ENCODE measurements at regions of chr2 and their contacts with region 1.

Region 1: GRCh38 chr2:201451292-201452057 is at the starts of genes STRADB and TRAK2:
- DNase-seq: peak; percentile 98
- ATAC-seq: peak; percentile 92
- H3K4me3 ChIP-seq: peak within 1 kb of the TSS; percentile 61 to 94 (median 69)
- H3K4me3 Mint-ChIP-seq: peak within 1 kb of the TSS; percentile 97
- H3K27ac ChIP-seq: peak within 1 kb of the TSS; percentile 54 to 88
- H3K27ac Mint-ChIP-seq: peak within 1 kb of the TSS; percentile 96
- H3K4me1 ChIP-seq: peaks cover 39 to 43% of the 10 kb centered on the region in 2 donors
- H3K4me1 Mint-ChIP-seq: peaks cover 41% of the 10 kb centered on the region
- H3K27me3 ChIP-seq: no peaks in the 10 kb centered on the region
- H3K27me3 Mint-ChIP-seq: no peaks in the 10 kb centered on the region
- CTCF ChIP-seq: peak; percentile 48
- total RNA-seq, gene STRADB: 17.5 and 20.6 TPM in 2 replicates
- total RNA-seq, gene TRAK2: 21.6 and 24.5 TPM in 2 replicates

Region 2: GRCh38 chr2:200525882-200526651 is 925.4 kb before region 1 on chr2 and contains the start of gene SGO2:
- CTCF ChIA-PET with region 1: no interaction called
- POLR2A ChIA-PET with region 1: no interaction called
- intact Hi-C with region 1: loop called (anchors 2 kb)
- DNase-seq: peak; percentile 95
- ATAC-seq: peak; percentile 100
- H3K4me3 ChIP-seq: peak within 1 kb of the TSS; percentile 75 to 93 (median 87)
- H3K4me3 Mint-ChIP-seq: peak within 1 kb of the TSS; percentile 93
- H3K27ac ChIP-seq: peak within 1 kb of the TSS in 1 of 2 donors; percentile 57
- H3K27ac Mint-ChIP-seq: peak within 1 kb of the TSS; percentile 83
- H3K4me1 ChIP-seq: peaks cover 7 to 9% of the 10 kb centered on the region in 2 donors
- H3K4me1 Mint-ChIP-seq: peaks cover 12% of the 10 kb centered on the region
- H3K27me3 ChIP-seq: peaks cover 0 to 6% (median 0%) of the 10 kb centered on the region in 4 experiments
- H3K27me3 Mint-ChIP-seq: peaks cover 8% of the 10 kb centered on the region
- CTCF ChIP-seq: no peak
- total RNA-seq, gene SGO2: 4.0 and 5.3 TPM in 2 replicates

Region 3: DNA sequence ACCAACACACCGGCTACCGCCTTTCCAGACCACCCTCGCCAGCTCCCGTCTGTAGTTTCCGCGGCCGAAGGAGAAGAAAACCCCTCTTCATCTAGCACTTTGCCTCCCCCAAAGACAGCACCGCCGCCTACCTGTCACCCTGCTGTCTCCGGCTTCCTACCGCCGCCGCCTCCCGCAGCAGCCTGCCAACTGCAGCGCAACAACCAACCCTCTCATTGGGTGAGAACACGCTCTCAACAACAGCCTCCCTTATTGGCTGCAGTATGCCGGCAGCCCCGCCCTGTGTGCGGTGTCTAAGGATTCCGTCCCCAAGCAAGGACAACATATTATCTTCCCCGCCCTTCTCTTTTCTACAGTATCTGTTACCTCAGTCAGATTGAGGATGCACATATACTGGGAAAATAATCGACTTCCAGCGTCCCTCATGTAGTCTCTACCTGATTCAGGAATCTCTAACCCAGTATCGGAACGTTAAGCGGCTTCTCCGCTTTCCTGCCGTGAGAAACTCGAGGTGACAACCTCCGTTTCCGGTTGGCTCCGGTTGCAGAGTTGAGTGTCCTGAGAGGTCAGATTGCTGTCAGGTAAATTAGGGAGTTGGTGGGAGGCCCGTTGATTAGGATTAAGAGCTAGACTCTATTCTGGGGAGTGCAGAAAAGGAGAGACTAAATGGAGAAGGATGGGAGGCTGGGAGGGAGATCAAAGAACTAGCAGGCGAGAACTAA is 379.8 kb before region 1 on chr2 and contains the starts of genes HYCC2 and NDUFB3:
- CTCF ChIA-PET with region 1: no interaction called
- POLR2A ChIA-PET with region 1: no interaction called
- intact Hi-C with region 1: loop called (anchors 1 kb)
- DNase-seq: peak; percentile 98
- ATAC-seq: peak; percentile 97
- H3K4me3 ChIP-seq: peak within 1 kb of the TSS; percentile 61 to 92 (median 86)
- H3K4me3 Mint-ChIP-seq: peak within 1 kb of the TSS; percentile 91
- H3K27ac ChIP-seq: peak within 1 kb of the TSS; percentile 58 to 91
- H3K27ac Mint-ChIP-seq: peak within 1 kb of the TSS; percentile 98
- H3K4me1 ChIP-seq: peaks cover 18 to 27% of the 10 kb centered on the region in 2 donors
- H3K4me1 Mint-ChIP-seq: peaks cover 39% of the 10 kb centered on the region
- H3K27me3 ChIP-seq: no peaks in the 10 kb centered on the region
- H3K27me3 Mint-ChIP-seq: no peaks in the 10 kb centered on the region
- CTCF ChIP-seq: peak; percentile 40
- total RNA-seq, gene HYCC2: 30.1 and 32.4 TPM in 2 replicates
- total RNA-seq, gene NDUFB3: 35.1 and 44.7 TPM in 2 replicates

Region 4: GRCh38 chr2:201420442-201421113 is 30.9 kb before region 1 on chr2:
- CTCF ChIA-PET with region 1: no interaction called
- POLR2A ChIA-PET with region 1: no interaction called
- intact Hi-C with region 1: no loop called
- DNase-seq: no peak
- ATAC-seq: no peak
- H3K4me3 ChIP-seq: no peak overlapping the region
- H3K4me3 Mint-ChIP-seq: peak overlapping the region; percentile 34
- H3K27ac ChIP-seq: peak overlapping the region in 1 of 2 donors; percentile 61
- H3K27ac Mint-ChIP-seq: peak overlapping the region; percentile 71
- H3K4me1 ChIP-seq: peaks cover 13 to 40% of the 10 kb centered on the region in 2 donors
- H3K4me1 Mint-ChIP-seq: peaks cover 42% of the 10 kb centered on the region
- H3K27me3 ChIP-seq: no peaks in the 10 kb centered on the region
- H3K27me3 Mint-ChIP-seq: no peaks in the 10 kb centered on the region
- CTCF ChIP-seq: no peak

Region 5: DNA sequence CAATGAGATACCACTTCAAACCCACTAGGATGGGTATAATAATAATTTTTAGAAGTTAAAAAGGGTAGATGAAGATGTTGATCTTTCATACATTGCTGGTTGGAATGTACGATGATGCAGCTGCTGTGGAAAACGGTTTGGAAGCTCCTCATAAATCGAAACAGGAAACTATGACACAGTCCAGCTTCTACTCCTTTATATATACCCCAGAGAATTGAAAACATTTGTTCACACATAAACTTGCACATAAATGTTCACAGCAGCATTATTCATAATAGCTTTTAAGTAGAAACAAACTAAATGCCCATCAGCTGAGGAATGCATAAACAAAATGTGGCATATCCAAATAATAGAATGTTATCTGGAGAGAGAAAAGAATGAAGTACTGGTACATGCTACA is 95.1 kb after region 1 on chr2:
- CTCF ChIA-PET with region 1: no interaction called
- POLR2A ChIA-PET with region 1: no interaction called
- intact Hi-C with region 1: no loop called
- DNase-seq: no peak
- ATAC-seq: no peak
- H3K4me3 ChIP-seq: no peak overlapping the region
- H3K4me3 Mint-ChIP-seq: no peak overlapping the region
- H3K27ac ChIP-seq: no peak overlapping the region
- H3K27ac Mint-ChIP-seq: no peak overlapping the region
- H3K4me1 ChIP-seq: no peaks in the 10 kb centered on the region
- H3K4me1 Mint-ChIP-seq: no peaks in the 10 kb centered on the region
- H3K27me3 ChIP-seq: no peaks in the 10 kb centered on the region
- H3K27me3 Mint-ChIP-seq: no peaks in the 10 kb centered on the region
- CTCF ChIP-seq: no peak

Region 6: DNA sequence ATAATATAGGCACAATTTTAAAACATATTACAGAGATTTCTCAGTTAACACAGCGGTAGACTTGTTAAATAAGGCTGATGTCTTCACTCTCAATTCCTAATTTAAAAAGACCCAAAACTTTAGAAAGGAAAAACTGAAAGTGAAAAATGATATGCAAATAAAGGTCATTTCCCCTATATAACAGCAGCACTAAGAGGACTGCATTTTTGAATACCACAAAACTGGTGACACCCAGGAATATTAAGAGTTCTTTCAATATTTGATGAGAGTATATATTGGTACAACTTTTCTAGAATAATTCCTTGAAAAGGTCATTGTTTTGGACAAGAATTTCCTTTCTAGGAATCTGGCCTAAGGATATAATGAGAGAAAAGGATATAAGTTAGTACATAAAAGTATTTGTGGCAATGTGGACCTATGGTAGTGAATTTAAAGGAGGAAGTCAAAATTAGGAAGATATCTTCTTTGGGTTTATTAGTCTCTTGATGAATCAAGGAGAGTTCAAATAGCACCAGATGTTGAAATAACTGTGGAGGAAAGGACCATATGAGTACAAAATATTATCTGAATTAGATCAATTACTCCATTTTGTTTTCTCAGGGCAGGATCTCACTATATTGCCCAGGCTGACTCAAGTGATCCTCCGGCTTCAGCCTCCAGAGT is 121.5 kb after region 1 on chr2:
- CTCF ChIA-PET with region 1: no interaction called
- POLR2A ChIA-PET with region 1: no interaction called
- intact Hi-C with region 1: loop called (anchors 10 kb)
- DNase-seq: peak; percentile 60
- ATAC-seq: peak; percentile 39
- H3K4me3 ChIP-seq: peak overlapping the region in 2 of 5 experiments; percentile 18 to 57
- H3K4me3 Mint-ChIP-seq: peak overlapping the region; percentile 56
- H3K27ac ChIP-seq: peak overlapping the region; percentile 57 to 86
- H3K27ac Mint-ChIP-seq: peak overlapping the region; percentile 94
- H3K4me1 ChIP-seq: peaks cover 29 to 43% of the 10 kb centered on the region in 2 donors
- H3K4me1 Mint-ChIP-seq: peaks cover 36% of the 10 kb centered on the region
- H3K27me3 ChIP-seq: no peaks in the 10 kb centered on the region
- H3K27me3 Mint-ChIP-seq: no peaks in the 10 kb centered on the region
- CTCF ChIP-seq: no peak

Region 7: GRCh38 chr2:202033321-202034248 is 582.1 kb after region 1 on chr2 and contains the start of gene FZD7:
- CTCF ChIA-PET with region 1: no interaction called
- POLR2A ChIA-PET with region 1: no interaction called
- intact Hi-C with region 1: loop called (anchors 5 kb)
- DNase-seq: peak; percentile 90
- ATAC-seq: peak; percentile 85
- H3K4me3 ChIP-seq: peak within 1 kb of the TSS; percentile 63 to 89 (median 75)
- H3K4me3 Mint-ChIP-seq: peak within 1 kb of the TSS; percentile 91
- H3K27ac ChIP-seq: no peak within 1 kb of the TSS
- H3K27ac Mint-ChIP-seq: peak within 1 kb of the TSS; percentile 78
- H3K4me1 ChIP-seq: peaks cover 20 to 25% of the 10 kb centered on the region in 2 donors
- H3K4me1 Mint-ChIP-seq: peaks cover 13% of the 10 kb centered on the region
- H3K27me3 ChIP-seq: peaks cover 0 to 43% (median 32%) of the 10 kb centered on the region in 4 experiments
- H3K27me3 Mint-ChIP-seq: peaks cover 22% of the 10 kb centered on the region
- CTCF ChIP-seq: no peak
- total RNA-seq, gene FZD7: 2.1 TPM in 2 replicates